ENCODE measurements at regions of chr1 and their contacts with region 1.

Region 1: GRCh38 chr1:225999227-225999911 is at the start of gene SDE2:
- DNase-seq: peak; percentile 99
- ATAC-seq: peak; percentile 82
- H3K4me3 Mint-ChIP-seq: peak within 1 kb of the TSS; percentile 100
- H3K27ac Mint-ChIP-seq: peak within 1 kb of the TSS; percentile 100
- H3K4me1 Mint-ChIP-seq: peaks cover 81% of the 10 kb centered on the region
- H3K27me3 Mint-ChIP-seq: no peaks in the 10 kb centered on the region
- CTCF ChIP-seq: no peak
- total RNA-seq, gene SDE2: 21.1 and 21.8 TPM in 2 replicates

Region 2: GRCh38 chr1:225441314-225442122 is 557.9 kb before region 1 on chr1:
- CTCF ChIA-PET with region 1: no interaction called
- POLR2A ChIA-PET with region 1: interaction called, 10 read pairs
- intact Hi-C with region 1: no loop called
- DNase-seq: no peak
- ATAC-seq: no peak
- H3K4me3 Mint-ChIP-seq: peak overlapping the region; percentile 25
- H3K27ac Mint-ChIP-seq: peak overlapping the region; percentile 78
- H3K4me1 Mint-ChIP-seq: peaks cover 69% of the 10 kb centered on the region
- H3K27me3 Mint-ChIP-seq: no peaks in the 10 kb centered on the region
- CTCF ChIP-seq: no peak

Region 3: DNA sequence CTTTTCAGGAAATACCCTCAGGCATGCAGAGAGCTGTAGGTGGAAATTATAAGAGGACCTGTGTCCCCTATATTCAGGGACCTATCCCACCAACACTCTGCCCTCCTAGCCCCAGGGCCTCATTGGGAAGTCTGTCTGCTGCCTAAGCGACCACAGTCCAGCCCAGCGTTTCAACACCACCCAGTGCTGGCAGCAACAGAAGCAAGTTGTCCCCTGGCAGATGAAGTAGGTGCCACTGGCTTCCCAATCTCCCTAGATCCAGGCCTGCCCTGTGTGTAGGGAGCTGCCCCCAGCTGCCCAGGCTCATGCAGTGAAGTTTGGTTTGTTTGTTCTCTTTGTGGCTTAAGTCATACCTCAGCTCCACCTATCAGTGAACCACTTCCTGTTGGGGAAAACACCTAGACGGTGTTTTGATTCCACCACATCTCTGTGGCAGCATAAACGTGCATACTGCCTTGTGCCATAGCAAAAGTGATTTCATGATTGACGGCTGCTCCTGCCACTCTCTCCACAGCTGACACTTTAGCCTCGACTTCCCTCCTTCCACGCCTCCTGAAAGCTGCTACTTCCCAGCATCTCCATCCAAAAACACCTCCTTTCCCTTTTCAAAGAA is 102.3 kb before region 1 on chr1:
- CTCF ChIA-PET with region 1: no interaction called
- POLR2A ChIA-PET with region 1: interaction called, 10 read pairs
- intact Hi-C with region 1: no loop called
- DNase-seq: peak; percentile 34
- ATAC-seq: peak; percentile 99
- H3K4me3 Mint-ChIP-seq: peak overlapping the region; percentile 48
- H3K27ac Mint-ChIP-seq: peak overlapping the region; percentile 95
- H3K4me1 Mint-ChIP-seq: peaks cover 37% of the 10 kb centered on the region
- H3K27me3 Mint-ChIP-seq: no peaks in the 10 kb centered on the region
- CTCF ChIP-seq: no peak

Region 4: DNA sequence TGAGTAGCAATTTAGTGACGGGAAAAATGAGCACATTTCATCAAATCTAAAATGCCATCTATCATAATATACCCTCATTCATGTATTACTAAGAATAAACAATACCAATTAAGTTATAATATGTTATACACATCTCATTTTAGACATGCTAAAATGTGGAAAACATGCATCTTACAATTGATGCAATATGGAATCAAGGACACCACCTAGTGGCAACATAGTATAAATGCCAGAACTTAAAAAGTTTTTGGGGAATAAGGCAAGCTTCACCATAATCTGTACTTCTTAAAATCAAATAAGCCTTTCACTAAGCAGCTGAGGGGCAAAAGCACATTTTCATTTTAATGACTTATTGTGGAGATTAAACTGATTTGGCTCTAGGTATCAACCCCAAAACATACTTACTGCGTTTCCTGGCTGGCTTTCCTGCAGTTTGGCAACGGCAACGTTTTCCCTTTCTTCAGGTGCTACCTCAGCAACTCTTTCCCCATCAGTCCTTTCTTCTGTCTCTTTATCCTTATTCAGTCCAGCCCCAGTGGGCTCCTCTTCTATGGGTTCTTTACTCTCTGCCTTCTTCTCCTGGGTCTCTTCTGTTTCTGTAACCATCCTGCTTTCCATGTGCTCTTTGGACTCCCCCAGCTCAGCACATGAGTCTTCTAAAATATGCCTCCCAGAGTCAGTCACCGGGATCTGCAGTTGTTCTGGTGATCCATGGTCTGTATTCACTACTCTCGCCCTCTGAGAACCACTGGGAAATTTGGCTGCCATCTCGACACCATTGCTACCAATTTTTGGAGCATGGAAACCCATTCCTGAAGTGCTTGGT is 11.7 kb before region 1 on chr1:
- CTCF ChIA-PET with region 1: interaction called, 5 read pairs
- POLR2A ChIA-PET with region 1: interaction called, 24 read pairs
- intact Hi-C with region 1: loop called (anchors 1 kb)
- DNase-seq: no peak
- ATAC-seq: peak; percentile 69
- H3K4me3 Mint-ChIP-seq: no peak overlapping the region
- H3K27ac Mint-ChIP-seq: peak overlapping the region; percentile 5
- H3K4me1 Mint-ChIP-seq: peaks cover 23% of the 10 kb centered on the region
- H3K27me3 Mint-ChIP-seq: no peaks in the 10 kb centered on the region
- CTCF ChIP-seq: peak; percentile 54

Region 5: DNA sequence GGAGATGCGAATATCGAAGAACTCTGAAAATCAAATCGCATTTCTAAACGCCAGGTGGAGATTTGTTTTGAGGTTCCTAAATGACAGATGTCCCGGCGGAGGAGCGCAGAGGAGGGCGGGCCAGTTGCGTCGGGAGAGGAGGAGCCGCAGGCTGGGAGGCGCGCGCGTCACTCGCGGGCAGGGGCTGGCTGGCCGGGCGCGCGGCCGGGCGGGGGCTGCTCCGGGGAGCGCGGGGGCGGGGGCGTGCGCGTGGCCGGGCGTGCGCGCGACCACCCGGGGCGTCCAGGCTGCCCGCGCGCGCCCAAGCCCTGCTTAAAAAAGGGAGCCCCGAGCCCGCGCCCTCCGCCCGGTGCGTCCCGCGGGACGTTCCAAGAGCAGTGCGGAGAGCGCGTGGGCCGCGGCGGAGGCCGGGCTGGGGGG is 110.5 kb after region 1 on chr1:
- CTCF ChIA-PET with region 1: interaction called, 3 read pairs
- POLR2A ChIA-PET with region 1: interaction called, 89 read pairs
- intact Hi-C with region 1: loop called (anchors 1 kb)
- DNase-seq: peak; percentile 90
- ATAC-seq: peak; percentile 66
- H3K4me3 Mint-ChIP-seq: peak overlapping the region; percentile 91
- H3K27ac Mint-ChIP-seq: peak overlapping the region; percentile 93
- H3K4me1 Mint-ChIP-seq: peaks cover 42% of the 10 kb centered on the region
- H3K27me3 Mint-ChIP-seq: no peaks in the 10 kb centered on the region
- CTCF ChIP-seq: no peak

Region 6: GRCh38 chr1:226186124-226187018 is 187.0 kb after region 1 on chr1 and contains the start of gene ACBD3:
- CTCF ChIA-PET with region 1: no interaction called
- POLR2A ChIA-PET with region 1: interaction called, 3 read pairs
- intact Hi-C with region 1: loop called (anchors 5 kb)
- DNase-seq: peak; percentile 79
- ATAC-seq: peak; percentile 93
- H3K4me3 Mint-ChIP-seq: peak within 1 kb of the TSS; percentile 94
- H3K27ac Mint-ChIP-seq: peak within 1 kb of the TSS; percentile 94
- H3K4me1 Mint-ChIP-seq: peaks cover 45% of the 10 kb centered on the region
- H3K27me3 Mint-ChIP-seq: no peaks in the 10 kb centered on the region
- CTCF ChIP-seq: no peak
- total RNA-seq, gene ACBD3: 38.6 and 41.4 TPM in 2 replicates